Endothelial cell of umbilical vein (primary cell): ENCODE measurements at regions of chr1 and their contacts with region 1.

Region 1: DNA sequence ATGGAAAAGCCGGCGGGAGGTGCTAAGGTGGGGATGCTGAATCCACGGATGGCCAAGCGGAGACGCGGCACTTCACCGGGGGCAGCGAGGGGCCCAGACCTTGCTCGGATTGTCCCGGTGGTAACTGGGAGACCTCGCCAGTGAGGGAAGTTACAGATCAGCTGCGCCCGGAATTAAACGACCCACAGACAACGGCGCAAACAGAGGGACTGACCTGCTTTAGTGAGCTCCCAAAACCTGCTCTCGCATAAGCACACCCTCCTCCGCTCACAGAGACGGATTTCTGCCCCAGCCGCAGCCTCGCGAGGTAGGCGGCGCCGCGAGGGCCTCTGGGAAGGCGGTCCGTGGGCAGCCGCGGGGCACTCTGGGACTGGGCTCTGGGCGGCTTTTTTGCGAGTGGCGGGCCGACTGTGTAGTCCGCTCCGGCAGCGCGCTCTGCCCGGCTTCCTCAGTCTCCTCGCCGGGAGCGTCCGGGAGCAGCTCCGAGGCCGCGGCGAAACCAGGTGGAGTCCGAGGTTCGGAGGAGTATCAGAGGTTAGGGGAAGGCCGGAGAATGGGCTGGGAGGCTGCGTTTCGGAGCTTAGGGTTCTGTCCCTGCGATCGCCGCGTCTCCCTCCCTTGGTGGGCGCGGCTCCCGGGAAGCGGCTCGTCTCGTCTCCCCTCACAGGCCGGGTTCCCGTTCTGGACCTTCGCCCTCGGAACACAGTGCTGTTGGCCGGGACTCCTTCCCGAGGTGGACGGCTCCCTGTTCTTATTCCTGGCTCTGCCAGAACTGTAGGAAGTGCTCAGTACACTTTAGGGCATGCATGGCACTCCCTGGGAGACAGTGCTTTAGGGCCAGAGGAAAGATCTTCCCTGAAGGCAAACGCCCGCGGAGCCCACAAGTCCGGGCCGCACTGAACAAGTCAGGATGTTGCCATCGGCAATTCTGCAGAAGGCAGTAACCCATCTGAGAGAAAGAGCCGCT is at the start of gene EXO5:
- DNase-seq: peak; percentile 82
- H3K4me3 ChIP-seq: peak within 1 kb of the TSS; percentile 61 to 79 (median 78)
- H3K27ac ChIP-seq: peak within 1 kb of the TSS; percentile 13
- H3K4me1 ChIP-seq: peaks cover 9% of the 10 kb centered on the region
- H3K27me3 ChIP-seq: no peaks in the 10 kb centered on the region
- CTCF ChIP-seq: no peak
- POLR2A ChIP-seq: peak; percentile 91
- total RNA-seq, gene EXO5: 9.2 and 13.0 TPM in 2 replicates

Region 2: GRCh38 chr1:40344597-40344996 is 164.1 kb before region 1 on chr1:
- CTCF ChIA-PET with region 1: no interaction called
- POLR2A ChIA-PET with region 1: no interaction called
- dilution Hi-C with region 1: no loop called
- intact Hi-C with region 1: no loop called
- DNase-seq: no peak
- H3K4me3 ChIP-seq: no peak overlapping the region
- H3K27ac ChIP-seq: no peak overlapping the region
- H3K4me1 ChIP-seq: no peaks in the 10 kb centered on the region
- H3K27me3 ChIP-seq: peaks cover 0 to 3% of the 10 kb centered on the region in 2 experiments
- CTCF ChIP-seq: no peak
- POLR2A ChIP-seq: no peak

Region 3: GRCh38 chr1:40476924-40477677 is 31.6 kb before region 1 on chr1 and contains the start of gene ZFP69:
- CTCF ChIA-PET with region 1: interaction called, 3 read pairs
- POLR2A ChIA-PET with region 1: interaction called, 4 read pairs
- dilution Hi-C with region 1: no loop called
- intact Hi-C with region 1: loop called (anchors 2 kb)
- DNase-seq: peak; percentile 52
- H3K4me3 ChIP-seq: peak within 1 kb of the TSS; percentile 40 to 95 (median 95)
- H3K27ac ChIP-seq: peak within 1 kb of the TSS; percentile 28
- H3K4me1 ChIP-seq: peaks cover 12% of the 10 kb centered on the region
- H3K27me3 ChIP-seq: no peaks in the 10 kb centered on the region
- CTCF ChIP-seq: no peak
- POLR2A ChIP-seq: peak; percentile 72
- total RNA-seq, gene ZFP69: 2.4 and 3.2 TPM in 2 replicates